HEK293 (cell line): ENCODE measurements at regions of chr12 and their contacts with region 1.

Region 1: DNA sequence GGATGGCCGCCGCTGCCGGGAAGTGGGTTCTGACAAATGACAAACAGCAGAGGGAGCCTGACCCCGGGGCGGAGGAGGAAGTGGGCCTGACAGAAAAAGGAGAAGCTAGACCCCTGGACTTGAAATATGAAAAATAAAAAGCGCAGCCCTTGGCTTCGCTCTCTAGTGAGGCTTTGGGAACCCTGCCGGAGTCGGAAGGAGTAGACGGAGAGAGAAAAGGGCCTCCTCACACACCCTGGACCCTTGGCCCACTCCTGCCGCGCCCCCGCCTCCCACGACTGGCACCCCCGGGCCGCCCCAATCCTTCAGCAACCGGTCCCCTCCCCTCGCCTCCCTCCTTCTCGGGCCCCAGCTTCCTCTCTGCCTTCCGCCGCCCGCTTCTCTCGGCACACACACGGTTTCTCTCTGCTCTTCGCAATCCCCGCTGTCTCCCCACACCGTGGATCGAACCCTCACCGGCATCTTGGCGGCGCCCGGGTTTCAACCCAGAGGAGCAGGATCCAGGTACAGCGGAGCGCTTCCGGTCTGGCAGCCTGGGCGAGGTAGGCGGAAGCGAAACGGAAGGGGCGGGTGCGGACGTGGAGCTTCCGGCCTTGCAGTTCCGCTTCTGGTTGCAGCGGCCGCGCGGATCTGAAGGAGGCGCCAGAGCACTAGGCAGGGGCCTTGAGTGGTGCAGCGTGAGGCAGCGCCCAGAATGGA is at the start of gene ARPC3:
- H3K4me3 ChIP-seq: peak within 1 kb of the TSS; percentile 73
- H3K27ac ChIP-seq: peak within 1 kb of the TSS; percentile 66
- H3K4me1 ChIP-seq: no peaks in the 10 kb centered on the region
- CTCF ChIP-seq: peak; percentile 96

Region 2: GRCh38 chr12:110100315-110100970 is 349.5 kb before region 1 on chr12:
- CTCF ChIA-PET with region 1: interaction called, 11 read pairs
- POLR2A ChIA-PET with region 1: interaction called, 5 read pairs
- H3K4me3 ChIP-seq: no peak overlapping the region
- H3K27ac ChIP-seq: no peak overlapping the region
- H3K4me1 ChIP-seq: no peaks in the 10 kb centered on the region
- CTCF ChIP-seq: peak; percentile 70

Region 3: DNA sequence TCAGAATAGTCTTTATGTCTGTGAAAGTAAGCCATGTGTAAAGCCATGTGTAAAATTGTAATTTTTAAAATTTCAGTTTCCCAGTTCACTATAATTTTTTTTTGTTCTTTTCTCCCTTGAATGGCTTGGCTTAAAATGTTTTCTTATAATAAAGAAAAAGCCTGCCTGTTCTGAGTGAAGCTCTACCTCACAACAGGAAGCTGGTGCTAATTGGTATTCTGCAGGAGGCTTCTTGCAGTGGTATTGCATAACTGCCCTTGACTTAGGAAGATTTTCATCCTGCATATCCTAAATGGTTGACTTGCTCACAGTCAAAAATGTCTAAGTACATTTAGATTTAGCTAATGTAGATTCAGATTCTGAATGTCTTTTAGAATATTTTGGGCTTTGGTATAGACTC is 119.4 kb before region 1 on chr12:
- CTCF ChIA-PET with region 1: no interaction called
- POLR2A ChIA-PET with region 1: no interaction called
- H3K4me3 ChIP-seq: no peak overlapping the region
- H3K27ac ChIP-seq: no peak overlapping the region
- H3K4me1 ChIP-seq: no peaks in the 10 kb centered on the region; the same call in 1 of the 2 replicates
- CTCF ChIP-seq: no peak

Region 4: DNA sequence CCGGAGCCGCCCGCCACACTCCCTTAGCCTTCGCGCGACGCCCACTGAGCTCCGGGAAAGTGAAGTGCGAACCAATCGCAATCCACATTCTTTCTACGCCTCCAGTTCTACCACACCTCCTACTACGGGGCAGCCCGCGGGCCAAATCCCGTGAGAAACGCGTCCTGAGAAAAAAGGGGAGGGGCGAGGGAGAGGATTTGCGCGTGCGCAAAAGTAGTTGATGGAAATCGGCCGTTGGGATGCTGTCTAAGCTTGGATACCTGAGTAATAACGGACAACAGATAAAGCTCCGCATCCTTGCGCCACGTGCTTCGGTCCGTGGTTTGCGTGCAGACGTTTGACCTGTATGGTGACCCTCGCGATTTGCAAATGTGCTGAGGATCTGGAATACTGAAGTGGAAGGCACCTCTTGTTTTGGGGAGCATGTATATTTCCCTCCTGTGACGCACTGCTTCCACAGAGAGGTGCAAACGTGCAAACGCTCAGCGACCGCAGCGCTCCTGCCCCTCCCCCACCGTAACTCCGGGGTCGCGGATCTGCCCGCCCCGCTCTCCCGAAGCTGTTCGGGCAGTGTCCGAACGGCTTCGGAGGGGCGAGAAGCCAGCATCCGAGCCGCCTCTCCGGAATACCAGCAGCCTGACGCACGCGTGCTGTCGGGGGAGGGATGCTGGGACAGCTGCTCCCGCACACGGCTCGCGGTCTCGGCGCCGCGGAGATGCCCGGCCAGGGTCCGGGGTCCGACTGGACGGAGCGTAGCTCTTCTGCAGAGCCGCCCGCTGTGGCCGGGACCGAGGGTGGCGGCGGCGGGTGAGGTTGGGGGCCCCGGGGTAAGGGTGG is 18.5 kb after region 1 on chr12 and contains the starts of genes FAM216A and GPN3:
- CTCF ChIA-PET with region 1: interaction called, 10 read pairs
- POLR2A ChIA-PET with region 1: interaction called, 39 read pairs
- H3K4me3 ChIP-seq: peak within 1 kb of the TSS; percentile 78
- H3K27ac ChIP-seq: peak within 1 kb of the TSS; percentile 93
- H3K4me1 ChIP-seq: peaks cover 5% of the 10 kb centered on the region; the same call in 1 of the 2 replicates
- CTCF ChIP-seq: no peak

Region 5: GRCh38 chr12:110583137-110584059 is 133.4 kb after region 1 on chr12 and contains the start of gene PPTC7:
- CTCF ChIA-PET with region 1: no interaction called
- POLR2A ChIA-PET with region 1: no interaction called
- H3K4me3 ChIP-seq: peak within 1 kb of the TSS; percentile 87
- H3K27ac ChIP-seq: peak within 1 kb of the TSS; percentile 80
- H3K4me1 ChIP-seq: peaks cover 8% of the 10 kb centered on the region
- CTCF ChIP-seq: no peak

Region 6: GRCh38 chr12:110641521-110641920 is 191.6 kb after region 1 on chr12:
- CTCF ChIA-PET with region 1: no interaction called
- POLR2A ChIA-PET with region 1: no interaction called
- H3K4me3 ChIP-seq: no peak overlapping the region
- H3K27ac ChIP-seq: no peak overlapping the region
- H3K4me1 ChIP-seq: 0 out of 2 replicates have a peak, but pooled peaks cover 3% of the 10 kb centered on the region
- CTCF ChIP-seq: no peak

Region 7: GRCh38 chr12:110888256-110888991 is 438.5 kb after region 1 on chr12:
- CTCF ChIA-PET with region 1: interaction called, 12 read pairs
- POLR2A ChIA-PET with region 1: no interaction called
- H3K4me3 ChIP-seq: no peak overlapping the region
- H3K27ac ChIP-seq: no peak overlapping the region
- H3K4me1 ChIP-seq: no peaks in the 10 kb centered on the region
- CTCF ChIP-seq: no peak